Activated T-helper 2 cell treated with anti-CD3 and anti-CD28 coated beads, Interferon-gamma antibody, Interleukin-2, Interleukin-4, amounts not matched to agents 10 μg/mL and 5 μg/mL and 100 μg/mL, durations not matched to agents 14 hours and 24 hours and 36 hours (primary cell): ENCODE measurements at regions of chr1 and their contacts with region 1.

Region 1: GRCh38 chr1:150890033-150890416 is 3.1 kb downstream of the CTXND2 start:
- DNase-seq: no peak
- H3K4me3 Mint-ChIP-seq: peak overlapping the region; percentile 60
- H3K27ac Mint-ChIP-seq: peak overlapping the region; percentile 64
- H3K4me1 Mint-ChIP-seq: peaks cover 34% of the 10 kb centered on the region
- H3K27me3 Mint-ChIP-seq: no peaks in the 10 kb centered on the region

Region 2: DNA sequence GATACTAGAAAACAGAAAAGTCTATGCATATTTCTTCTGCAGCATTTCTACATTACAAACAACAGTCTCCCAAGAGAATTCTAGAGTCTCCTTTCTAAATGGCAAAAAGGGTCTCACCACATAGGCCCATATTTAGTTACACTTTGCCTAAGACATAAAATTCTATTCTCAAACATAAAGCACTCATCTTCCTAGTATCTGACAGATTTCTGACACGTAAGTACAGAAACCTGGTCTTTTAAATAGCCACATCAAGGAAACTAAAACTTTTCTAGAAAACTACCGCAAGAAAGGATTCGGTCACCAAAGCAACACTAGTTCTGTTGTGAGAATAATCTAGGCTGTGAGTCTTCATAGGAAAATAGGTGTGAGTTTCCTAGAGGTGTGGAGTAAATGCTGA is 48.4 kb before region 1 on chr1:
- intact Hi-C with region 1: loop called (anchors 5 kb)
- DNase-seq: no peak
- H3K4me3 Mint-ChIP-seq: no peak overlapping the region
- H3K27ac Mint-ChIP-seq: peak overlapping the region; percentile 72
- H3K4me1 Mint-ChIP-seq: peaks cover 33% of the 10 kb centered on the region
- H3K27me3 Mint-ChIP-seq: no peaks in the 10 kb centered on the region

Region 3: DNA sequence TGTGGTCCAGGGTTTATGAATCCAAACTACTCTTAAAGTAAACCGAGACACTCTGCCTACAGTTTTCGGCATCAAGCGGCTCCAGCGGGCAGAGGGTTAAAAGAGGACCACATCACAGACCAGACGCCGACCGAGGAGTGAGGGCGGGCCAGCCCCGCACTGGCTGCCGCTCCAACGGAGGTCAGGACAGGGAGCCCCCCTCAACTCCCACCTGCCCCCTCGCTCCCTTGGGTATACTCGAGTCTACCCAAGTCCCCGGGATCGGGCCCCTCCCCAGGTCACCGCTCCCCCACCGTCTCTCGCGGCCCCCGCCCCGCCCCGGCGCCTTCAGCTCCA is 13.9 kb before region 1 on chr1:
- intact Hi-C with region 1: loop called (anchors 1 kb)
- DNase-seq: no peak
- H3K4me3 Mint-ChIP-seq: peak overlapping the region; percentile 95
- H3K27ac Mint-ChIP-seq: peak overlapping the region; percentile 92
- H3K4me1 Mint-ChIP-seq: peaks cover 33% of the 10 kb centered on the region
- H3K27me3 Mint-ChIP-seq: no peaks in the 10 kb centered on the region

Region 4: DNA sequence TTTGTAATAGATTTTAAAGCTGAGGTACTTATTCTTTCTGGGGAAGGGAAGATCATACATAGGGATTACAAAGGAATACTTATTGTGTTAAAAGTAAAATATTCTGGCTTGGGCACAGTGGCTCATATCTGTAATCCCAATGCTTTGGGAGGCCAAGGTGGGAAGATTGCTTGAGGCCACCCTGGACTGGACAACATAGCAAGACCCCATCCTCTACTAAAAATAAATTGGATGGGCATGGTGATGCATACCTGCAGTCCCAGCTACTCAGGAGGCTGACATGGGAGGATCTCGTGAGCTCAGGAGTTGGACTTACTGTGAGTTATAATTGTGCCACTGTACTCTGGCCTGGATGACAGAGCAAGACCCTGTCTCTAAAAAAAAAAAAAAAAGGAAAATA is 208.1 kb after region 1 on chr1:
- intact Hi-C with region 1: no loop called
- DNase-seq: no peak
- H3K4me3 Mint-ChIP-seq: no peak overlapping the region
- H3K27ac Mint-ChIP-seq: no peak overlapping the region
- H3K4me1 Mint-ChIP-seq: no peaks in the 10 kb centered on the region
- H3K27me3 Mint-ChIP-seq: no peaks in the 10 kb centered on the region